Motor neuron (in vitro differentiated cells): ENCODE measurements at regions of chr10 and their contacts with region 1.

Region 1: GRCh38 chr10:19819419-19820033 is 3.3 kb downstream of the PLXDC2 start:
- ATAC-seq: no peak
- H3K4me3 ChIP-seq: peak overlapping the region in 4 of 5 donors; percentile 5 to 96 (median 60)
- H3K27ac ChIP-seq: no peak overlapping the region
- H3K4me1 ChIP-seq: peaks cover 0 to 9% of the 10 kb centered on the region in 2 donors

Region 2: GRCh38 chr10:18689498-18689897 is 1130.0 kb before region 1 on chr10:
- in situ Hi-C with region 1: loop called in 1 of 9 experiments (anchors 25 kb)
- ATAC-seq: peak in 4 of 8 experiments; percentile 50 to 68 (median 59)
- H3K4me3 ChIP-seq: no peak overlapping the region
- H3K27ac ChIP-seq: no peak overlapping the region
- H3K4me1 ChIP-seq: no peaks in the 10 kb centered on the region

Region 3: DNA sequence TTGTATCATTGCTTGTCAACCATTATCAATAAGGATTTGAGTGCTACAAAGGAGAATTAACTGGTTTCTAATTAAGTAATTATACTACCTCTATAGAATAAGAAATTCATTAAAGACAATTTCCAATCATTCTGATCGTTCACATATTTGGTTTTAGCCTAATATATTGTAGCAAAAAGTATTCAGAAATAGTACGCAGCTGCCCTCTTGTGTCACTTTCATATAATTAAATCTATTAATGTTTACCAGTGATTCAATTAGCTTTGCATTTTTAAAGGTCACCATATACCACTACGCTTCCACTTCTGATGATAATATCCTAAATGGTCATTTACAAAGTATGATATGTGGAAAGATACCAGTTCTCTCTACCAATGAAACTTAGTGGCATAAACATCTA is 949.3 kb after region 1 on chr10:
- in situ Hi-C with region 1: loop called in 2 of 9 experiments (anchors 25 kb)
- ATAC-seq: peak in 1 of 8 experiments; percentile 36
- H3K4me3 ChIP-seq: no peak overlapping the region
- H3K27ac ChIP-seq: no peak overlapping the region
- H3K4me1 ChIP-seq: no peaks in the 10 kb centered on the region

Region 4: GRCh38 chr10:20776384-20777118 is 957.0 kb after region 1 on chr10:
- in situ Hi-C with region 1: loop called in 3 of 9 experiments (anchors 25 kb)
- ATAC-seq: no peak
- H3K4me3 ChIP-seq: no peak overlapping the region
- H3K27ac ChIP-seq: no peak overlapping the region
- H3K4me1 ChIP-seq: no peaks in the 10 kb centered on the region